ENCODE measurements at regions of chr9 and their contacts with region 1.

Region 1: GRCh38 chr9:129156163-129156562 is 21.9 kb downstream of the IER5L start:
- DNase-seq: no peak
- ATAC-seq: no peak
- H3K4me3 ChIP-seq: no peak overlapping the region
- H3K27ac ChIP-seq: 0 out of 6 replicates have a peak overlapping the region, but pooled peaks of 1 of the 2 experiments have one; percentile 6
- H3K4me1 ChIP-seq: no peaks in the 10 kb centered on the region
- CTCF ChIP-seq: no peak
- EP300 ChIP-seq: no peak
- POLR2A ChIP-seq: no peak
- RAD21 ChIP-seq: no peak

Region 2: GRCh38 chr9:128339771-128340690 is 816.1 kb before region 1 on chr9 and contains the start of gene SLC27A4:
- CTCF ChIA-PET with region 1: no interaction called
- POLR2A ChIA-PET with region 1: no interaction called
- DNase-seq: peak; percentile 81 to 93
- ATAC-seq: peak; percentile 86 to 89
- H3K4me3 ChIP-seq: peak within 1 kb of the TSS; percentile 90
- H3K27ac ChIP-seq: peak within 1 kb of the TSS; percentile 89 to 92
- H3K4me1 ChIP-seq: 0 out of 3 replicates have a peak, but pooled peaks cover 4% of the 10 kb centered on the region
- CTCF ChIP-seq: no peak
- EP300 ChIP-seq: no peak
- POLR2A ChIP-seq: peak; percentile 57
- RAD21 ChIP-seq: no peak
- polyA plus RNA-seq, gene SLC27A4: 14.5 and 14.9 TPM in 2 replicates

Region 3: DNA sequence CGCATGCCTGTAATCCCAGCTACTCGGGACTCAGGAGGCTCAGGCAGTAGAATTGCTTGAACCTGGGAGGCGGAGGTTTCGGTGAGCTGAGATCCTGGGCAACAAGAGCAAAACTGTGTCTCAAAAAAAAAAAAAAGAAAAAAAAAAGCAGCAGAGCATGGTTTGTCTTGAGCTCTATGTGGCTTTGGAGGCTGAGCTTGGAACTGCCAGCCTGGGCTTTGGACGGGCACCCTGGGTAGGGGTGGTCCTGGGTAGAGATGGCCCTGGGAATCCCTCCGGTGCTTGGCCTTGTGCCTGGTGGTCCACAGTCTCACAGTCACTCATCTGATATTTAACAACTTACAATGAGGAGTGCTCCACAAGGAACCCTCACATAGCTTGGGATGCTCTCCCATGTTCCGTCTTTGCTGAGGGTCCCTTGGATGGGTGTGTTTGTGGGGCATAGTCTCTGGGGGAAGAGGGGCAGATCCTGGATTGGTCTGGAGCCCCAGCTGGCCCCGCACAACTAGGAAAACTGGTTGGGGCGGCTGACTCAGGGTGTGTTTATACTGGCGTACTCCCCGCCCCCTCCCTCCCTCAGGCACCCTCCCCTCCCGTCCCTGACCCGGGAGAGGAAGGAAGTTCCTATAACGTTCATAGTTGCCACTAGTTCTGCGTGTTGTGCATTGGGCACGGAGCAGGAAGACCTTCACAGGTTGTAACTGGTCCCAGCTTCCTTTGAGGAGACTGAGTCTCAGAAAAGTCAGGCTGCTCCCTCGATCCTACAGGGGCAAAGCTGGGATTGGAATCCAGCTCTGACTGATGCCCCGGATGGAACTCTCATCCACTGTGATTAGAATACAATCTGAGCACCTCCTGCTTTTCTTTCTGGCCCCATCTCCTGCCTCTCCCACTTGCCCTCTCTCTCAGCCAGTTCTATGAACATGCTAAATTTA is 10.7 kb after region 1 on chr9:
- CTCF ChIA-PET with region 1: interaction called, 1,029 read pairs
- POLR2A ChIA-PET with region 1: interaction called, 5 read pairs
- DNase-seq: peak; percentile 79 to 97
- ATAC-seq: peak; percentile 79 to 88
- H3K4me3 ChIP-seq: peak overlapping the region; percentile 9; the same call in 1 of the 3 replicates
- H3K27ac ChIP-seq: peak overlapping the region; percentile 94 to 99
- H3K4me1 ChIP-seq: peaks cover 48% of the 10 kb centered on the region
- CTCF ChIP-seq: no peak
- EP300 ChIP-seq: no peak
- POLR2A ChIP-seq: peak; percentile 70
- RAD21 ChIP-seq: no peak

Region 4: GRCh38 chr9:129307227-129307970 is 151.2 kb after region 1 on chr9:
- CTCF ChIA-PET with region 1: no interaction called
- POLR2A ChIA-PET with region 1: no interaction called
- DNase-seq: no peak
- ATAC-seq: no peak
- H3K4me3 ChIP-seq: no peak overlapping the region
- H3K27ac ChIP-seq: 0 out of 6 replicates have a peak overlapping the region, but pooled peaks of 1 of the 2 experiments have one; percentile 18
- H3K4me1 ChIP-seq: 0 out of 3 replicates have a peak, but pooled peaks cover 4% of the 10 kb centered on the region
- CTCF ChIP-seq: no peak
- EP300 ChIP-seq: no peak
- POLR2A ChIP-seq: no peak
- RAD21 ChIP-seq: no peak